ENCODE measurements at regions of chr22 and their contacts with region 1.

Region 1: GRCh38 chr22:50030297-50031188 is 18.0 kb upstream of the IL17REL start:
- DNase-seq: peak; percentile 90
- H3K4me3 Mint-ChIP-seq: no peak overlapping the region
- H3K27ac Mint-ChIP-seq: no peak overlapping the region
- H3K4me1 Mint-ChIP-seq: peaks cover 20% of the 10 kb centered on the region
- H3K27me3 Mint-ChIP-seq: peaks cover 54% of the 10 kb centered on the region

Region 2: GRCh38 chr22:49767355-49768062 is 263.0 kb before region 1 on chr22:
- CTCF ChIA-PET with region 1: interaction called, 18 read pairs
- DNase-seq: peak; percentile 47
- H3K4me3 Mint-ChIP-seq: no peak overlapping the region
- H3K27ac Mint-ChIP-seq: peak overlapping the region; percentile 17
- H3K4me1 Mint-ChIP-seq: peaks cover 15% of the 10 kb centered on the region
- H3K27me3 Mint-ChIP-seq: peaks cover 3% of the 10 kb centered on the region

Region 3: GRCh38 chr22:49925525-49926128 is 104.9 kb before region 1 on chr22:
- CTCF ChIA-PET with region 1: interaction called, 57 read pairs
- DNase-seq: peak; percentile 78
- H3K4me3 Mint-ChIP-seq: peak overlapping the region; percentile 71
- H3K27ac Mint-ChIP-seq: peak overlapping the region; percentile 97
- H3K4me1 Mint-ChIP-seq: peaks cover 53% of the 10 kb centered on the region
- H3K27me3 Mint-ChIP-seq: no peaks in the 10 kb centered on the region

Region 4: GRCh38 chr22:49930739-49931412 is 99.7 kb before region 1 on chr22:
- CTCF ChIA-PET with region 1: interaction called, 57 read pairs
- DNase-seq: peak; percentile 62
- H3K4me3 Mint-ChIP-seq: no peak overlapping the region
- H3K27ac Mint-ChIP-seq: peak overlapping the region; percentile 79
- H3K4me1 Mint-ChIP-seq: peaks cover 58% of the 10 kb centered on the region
- H3K27me3 Mint-ChIP-seq: no peaks in the 10 kb centered on the region

Region 5: GRCh38 chr22:49992921-49993648 is 37.5 kb before region 1 on chr22:
- CTCF ChIA-PET with region 1: interaction called, 26 read pairs
- DNase-seq: peak; percentile 77
- H3K4me3 Mint-ChIP-seq: no peak overlapping the region
- H3K27ac Mint-ChIP-seq: no peak overlapping the region
- H3K4me1 Mint-ChIP-seq: peaks cover 5% of the 10 kb centered on the region
- H3K27me3 Mint-ChIP-seq: peaks cover 37% of the 10 kb centered on the region

Measured in activated naive CD4-positive, alpha-beta T cell treated with anti-CD3 and anti-CD28 coated beads, Interleukin-2, amount 10 ng/mL, durations not matched to agents 7 days and 5 days (primary cell).